Breast epithelium (tissue), 4 donors: ENCODE measurements at regions of chr3 and their contacts with region 1.

Region 1: DNA sequence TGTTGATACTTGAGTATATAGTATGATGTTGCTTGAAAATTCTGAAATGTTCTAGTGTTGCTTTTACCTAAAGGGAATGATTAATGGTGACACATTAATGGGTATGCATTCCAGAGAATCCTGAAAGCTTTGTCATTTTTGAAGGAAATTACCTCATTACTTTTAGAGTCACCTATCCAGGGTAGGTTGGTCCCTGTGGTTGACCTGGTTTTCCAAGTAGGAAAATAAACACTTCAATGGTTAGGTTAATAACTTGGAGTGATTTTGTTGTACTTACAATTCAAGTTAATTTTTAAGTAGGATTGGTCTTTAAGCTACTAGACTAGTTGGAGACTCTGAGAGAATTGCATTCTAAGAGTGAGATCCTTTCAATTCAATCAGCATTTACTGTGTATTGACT is 31.0 kb downstream of the MITF start:
- DNase-seq: no peak
- H3K4me3 ChIP-seq: no peak overlapping the region
- H3K27ac ChIP-seq: no peak overlapping the region
- H3K4me1 ChIP-seq: peaks cover 0 to 12% of the 10 kb centered on the region in 2 donors
- H3K27me3 ChIP-seq: no peaks in the 10 kb centered on the region
- CTCF ChIP-seq: no peak
- POLR2A ChIP-seq: no peak

Region 2: DNA sequence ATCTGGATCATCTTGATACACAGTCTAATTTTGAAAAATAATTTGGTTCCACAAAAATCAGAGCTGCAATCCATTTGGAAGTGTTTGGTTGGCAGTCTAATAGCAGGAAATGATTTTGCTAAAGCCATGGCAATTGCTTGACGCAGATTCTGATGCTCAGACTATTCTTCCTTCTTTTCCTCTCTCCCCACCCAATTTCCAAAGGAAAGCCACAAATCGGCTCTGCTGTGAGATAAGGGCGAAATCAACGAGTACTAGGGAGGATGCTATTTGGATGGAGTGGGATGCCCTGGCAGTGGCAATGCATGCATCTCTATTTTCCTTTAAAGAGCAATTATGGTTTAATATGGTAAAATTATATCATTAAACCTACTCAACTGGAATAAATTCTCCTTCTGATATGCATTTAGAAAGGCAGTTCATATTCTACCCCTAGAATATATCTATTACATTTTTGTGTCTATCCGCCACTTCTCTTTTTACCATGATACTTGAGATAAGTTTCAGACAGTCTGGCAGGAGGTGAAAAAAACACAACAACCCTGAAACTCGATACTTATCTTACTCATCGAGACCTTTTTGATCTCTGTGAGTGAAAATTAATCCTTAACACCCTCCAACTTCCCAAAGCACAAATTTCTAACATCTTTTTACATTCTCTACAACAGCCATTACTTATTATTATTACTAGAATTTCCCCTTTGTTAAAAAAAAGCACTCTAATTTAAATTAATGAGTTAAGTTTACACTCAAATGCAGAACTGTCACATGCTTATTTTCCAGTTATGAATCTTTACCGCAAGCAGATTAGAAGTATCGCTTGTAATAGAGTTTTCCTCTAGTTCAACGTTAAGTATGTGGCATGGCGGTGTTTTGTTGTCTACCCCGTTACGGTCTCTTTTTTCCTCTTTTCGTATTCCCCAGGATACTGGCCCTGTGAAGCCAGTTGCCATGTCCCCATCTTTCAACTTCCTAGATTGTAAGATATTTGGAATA is 1380.0 kb after region 1 on chr3:
- intact Hi-C with region 1: loop called (anchors 10 kb)
- DNase-seq: no peak
- H3K4me3 ChIP-seq: no peak overlapping the region
- H3K27ac ChIP-seq: no peak overlapping the region
- H3K4me1 ChIP-seq: no peaks in the 10 kb centered on the region
- H3K27me3 ChIP-seq: no peaks in the 10 kb centered on the region
- CTCF ChIP-seq: no peak
- POLR2A ChIP-seq: no peak

Region 3: GRCh38 chr3:71262364-71263265 is 1492.4 kb after region 1 on chr3:
- intact Hi-C with region 1: no loop called
- DNase-seq: no peak
- H3K4me3 ChIP-seq: peak overlapping the region in 1 of 3 donors; percentile 15
- H3K27ac ChIP-seq: peak overlapping the region in 1 of 2 donors; percentile 0
- H3K4me1 ChIP-seq: peaks cover 0 to 10% of the 10 kb centered on the region in 2 donors
- H3K27me3 ChIP-seq: no peaks in the 10 kb centered on the region
- CTCF ChIP-seq: no peak
- POLR2A ChIP-seq: no peak